ENCODE measurements at regions of chr20 and their contacts with region 1.

Region 1: DNA sequence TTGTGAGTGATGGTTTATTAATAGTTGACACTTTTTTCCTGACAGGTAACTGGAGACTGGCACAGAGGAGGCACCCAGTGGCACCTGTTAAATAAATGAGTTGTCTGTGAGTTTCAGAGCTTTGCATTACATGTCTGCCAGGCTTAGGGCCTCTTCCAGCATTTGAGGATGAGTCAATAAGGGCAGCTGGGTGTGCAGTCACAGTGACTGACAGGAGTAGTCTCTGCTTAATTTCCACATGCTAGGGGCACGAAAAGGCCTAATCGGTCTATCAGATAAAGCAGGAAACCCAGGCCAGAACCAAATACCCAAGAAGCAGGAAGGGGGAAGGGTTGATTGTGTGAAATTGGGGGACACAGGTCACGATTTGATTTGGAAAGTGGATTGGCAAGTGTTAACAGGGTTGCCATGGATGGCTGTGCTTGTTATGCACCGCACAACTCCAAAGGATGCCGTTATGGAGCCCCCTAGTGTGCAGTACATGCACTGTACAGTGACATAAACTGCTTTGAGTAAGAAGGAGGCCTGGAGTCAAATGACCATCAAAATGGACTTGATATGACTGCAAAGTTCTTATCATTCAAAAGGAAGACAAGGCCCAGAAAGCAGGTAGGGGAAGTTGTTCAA is 111.9 kb upstream of the GGTLC1 start:
- DNase-seq: peak; percentile 57 to 60 (median 59)
- H3K4me3 ChIP-seq: no peak overlapping the region
- H3K4me3 Mint-ChIP-seq: peak overlapping the region in 2 of 8 donors; percentile 36 to 41
- H3K27ac ChIP-seq: no peak overlapping the region
- H3K27ac Mint-ChIP-seq: peak overlapping the region in 3 of 7 donors; percentile 18 to 77 (median 52)
- H3K4me1 ChIP-seq: no peaks in the 10 kb centered on the region
- H3K4me1 Mint-ChIP-seq: peaks cover 0 to 6% (median 4%) of the 10 kb centered on the region in 4 donors
- H3K27me3 ChIP-seq: no peaks in the 10 kb centered on the region
- H3K27me3 Mint-ChIP-seq: peaks cover 0 to 4% of the 10 kb centered on the region in 2 donors

Region 2: GRCh38 chr20:23937303-23938117 is 163.0 kb before region 1 on chr20:
- CTCF ChIA-PET with region 1: interaction called, 58 read pairs
- POLR2A ChIA-PET with region 1: interaction called, 3 read pairs
- intact Hi-C with region 1: loop called (anchors 1 kb)
- DNase-seq: peak; percentile 53 to 68 (median 67)
- H3K4me3 ChIP-seq: no peak overlapping the region
- H3K4me3 Mint-ChIP-seq: no peak overlapping the region
- H3K27ac ChIP-seq: no peak overlapping the region
- H3K27ac Mint-ChIP-seq: no peak overlapping the region
- H3K4me1 ChIP-seq: no peaks in the 10 kb centered on the region
- H3K4me1 Mint-ChIP-seq: no peaks in the 10 kb centered on the region
- H3K27me3 ChIP-seq: no peaks in the 10 kb centered on the region
- H3K27me3 Mint-ChIP-seq: peaks cover 3 to 4% of the 10 kb centered on the region in 2 donors

Region 3: GRCh38 chr20:23995905-23996666 is 104.4 kb before region 1 on chr20:
- CTCF ChIA-PET with region 1: interaction called, 31 read pairs
- POLR2A ChIA-PET with region 1: no interaction called
- intact Hi-C with region 1: loop called (anchors 1 kb)
- DNase-seq: peak in 4 of 5 donors; percentile 30 to 45 (median 41)
- H3K4me3 ChIP-seq: no peak overlapping the region
- H3K4me3 Mint-ChIP-seq: peak overlapping the region in 1 of 8 donors; percentile 15
- H3K27ac ChIP-seq: no peak overlapping the region
- H3K27ac Mint-ChIP-seq: peak overlapping the region in 1 of 7 donors; percentile 11
- H3K4me1 ChIP-seq: no peaks in the 10 kb centered on the region
- H3K4me1 Mint-ChIP-seq: no peaks in the 10 kb centered on the region
- H3K27me3 ChIP-seq: no peaks in the 10 kb centered on the region
- H3K27me3 Mint-ChIP-seq: peaks cover 0 to 2% of the 10 kb centered on the region in 2 donors

Region 4: GRCh38 chr20:24027229-24027628 is 73.3 kb before region 1 on chr20:
- CTCF ChIA-PET with region 1: interaction called, 6 read pairs
- POLR2A ChIA-PET with region 1: interaction called, 4 read pairs
- intact Hi-C with region 1: loop called (anchors 10 kb)
- DNase-seq: peak; percentile 79 to 85 (median 83)
- H3K4me3 ChIP-seq: peak overlapping the region in 1 of 2 donors; percentile 34
- H3K4me3 Mint-ChIP-seq: peak overlapping the region; percentile 61 to 85 (median 68)
- H3K27ac ChIP-seq: peak overlapping the region; percentile 45
- H3K27ac Mint-ChIP-seq: peak overlapping the region; percentile 88 to 96 (median 95)
- H3K4me1 ChIP-seq: peaks cover 34% of the 10 kb centered on the region
- H3K4me1 Mint-ChIP-seq: peaks cover 20 to 53% (median 31%) of the 10 kb centered on the region in 4 donors
- H3K27me3 ChIP-seq: no peaks in the 10 kb centered on the region
- H3K27me3 Mint-ChIP-seq: no peaks in the 10 kb centered on the region

Region 5: GRCh38 chr20:24118441-24119175 is 18.1 kb after region 1 on chr20:
- CTCF ChIA-PET with region 1: interaction called, 10 read pairs
- POLR2A ChIA-PET with region 1: no interaction called
- intact Hi-C with region 1: no loop called
- DNase-seq: no peak
- H3K4me3 ChIP-seq: no peak overlapping the region
- H3K4me3 Mint-ChIP-seq: no peak overlapping the region
- H3K27ac ChIP-seq: no peak overlapping the region
- H3K27ac Mint-ChIP-seq: no peak overlapping the region
- H3K4me1 ChIP-seq: no peaks in the 10 kb centered on the region
- H3K4me1 Mint-ChIP-seq: peaks cover 0 to 2% (median 0%) of the 10 kb centered on the region in 4 donors
- H3K27me3 ChIP-seq: no peaks in the 10 kb centered on the region
- H3K27me3 Mint-ChIP-seq: peaks cover 7 to 20% of the 10 kb centered on the region in 2 donors

Region 6: GRCh38 chr20:24185791-24186190 is 85.3 kb after region 1 on chr20:
- CTCF ChIA-PET with region 1: no interaction called
- POLR2A ChIA-PET with region 1: no interaction called
- intact Hi-C with region 1: no loop called
- DNase-seq: no peak
- H3K4me3 ChIP-seq: no peak overlapping the region
- H3K4me3 Mint-ChIP-seq: no peak overlapping the region
- H3K27ac ChIP-seq: no peak overlapping the region
- H3K27ac Mint-ChIP-seq: no peak overlapping the region
- H3K4me1 ChIP-seq: no peaks in the 10 kb centered on the region
- H3K4me1 Mint-ChIP-seq: no peaks in the 10 kb centered on the region
- H3K27me3 ChIP-seq: no peaks in the 10 kb centered on the region
- H3K27me3 Mint-ChIP-seq: peaks cover 0 to 4% of the 10 kb centered on the region in 2 donors

Region 7: GRCh38 chr20:25065625-25066338 is 965.3 kb after region 1 on chr20:
- CTCF ChIA-PET with region 1: no interaction called
- POLR2A ChIA-PET with region 1: no interaction called
- intact Hi-C with region 1: loop called (anchors 10 kb)
- DNase-seq: peak; percentile 66 to 70 (median 67)
- H3K4me3 ChIP-seq: no peak overlapping the region
- H3K4me3 Mint-ChIP-seq: no peak overlapping the region
- H3K27ac ChIP-seq: no peak overlapping the region
- H3K27ac Mint-ChIP-seq: peak overlapping the region in 2 of 7 donors; percentile 4 to 26
- H3K4me1 ChIP-seq: no peaks in the 10 kb centered on the region
- H3K4me1 Mint-ChIP-seq: peaks cover 4 to 8% (median 5%) of the 10 kb centered on the region in 4 donors
- H3K27me3 ChIP-seq: peaks cover 7% of the 10 kb centered on the region
- H3K27me3 Mint-ChIP-seq: peaks cover 16 to 18% of the 10 kb centered on the region in 2 donors

Measured in CD4-positive, alpha-beta memory T cell (primary cell).